ENCODE measurements at regions of chr7 and their contacts with region 1.

Region 1: GRCh38 chr7:9324513-9324912 is 891.1 kb downstream of the NXPH1 start:
- DNase-seq: no peak
- H3K4me3 Mint-ChIP-seq: no peak overlapping the region
- H3K27ac Mint-ChIP-seq: no peak overlapping the region
- H3K4me1 Mint-ChIP-seq: no peaks in the 10 kb centered on the region
- H3K27me3 Mint-ChIP-seq: no peaks in the 10 kb centered on the region
- CTCF ChIP-seq: no peak

Region 2: DNA sequence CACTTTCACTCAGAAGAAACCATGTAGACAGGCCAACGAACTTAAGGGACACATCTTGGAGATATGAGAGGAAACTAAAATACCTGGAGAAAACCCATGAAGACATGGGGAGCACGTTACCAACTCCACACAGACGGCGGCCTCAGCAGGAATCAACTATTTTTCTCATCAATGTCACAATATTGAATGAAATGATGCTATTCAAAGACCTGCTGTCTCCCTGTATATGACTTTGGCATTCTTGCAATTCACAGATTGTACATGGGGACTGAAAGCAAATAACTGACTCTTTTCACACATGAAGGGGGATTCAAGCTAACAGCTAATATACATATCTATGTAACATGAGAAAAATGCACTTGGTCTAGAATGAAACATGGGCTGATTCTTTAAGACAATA is 22.1 kb before region 1 on chr7:
- CTCF ChIA-PET with region 1: no interaction called
- intact Hi-C with region 1: loop called (anchors 1 kb)
- DNase-seq: no peak
- H3K4me3 Mint-ChIP-seq: no peak overlapping the region
- H3K27ac Mint-ChIP-seq: no peak overlapping the region
- H3K4me1 Mint-ChIP-seq: peaks cover 6% of the 10 kb centered on the region
- H3K27me3 Mint-ChIP-seq: no peaks in the 10 kb centered on the region
- CTCF ChIP-seq: no peak